Activated B cell treated with CpG ODN at 0.5 μM for 24 hours (primary cell): ENCODE measurements at regions of chr4 and their contacts with region 1.

Region 1: DNA sequence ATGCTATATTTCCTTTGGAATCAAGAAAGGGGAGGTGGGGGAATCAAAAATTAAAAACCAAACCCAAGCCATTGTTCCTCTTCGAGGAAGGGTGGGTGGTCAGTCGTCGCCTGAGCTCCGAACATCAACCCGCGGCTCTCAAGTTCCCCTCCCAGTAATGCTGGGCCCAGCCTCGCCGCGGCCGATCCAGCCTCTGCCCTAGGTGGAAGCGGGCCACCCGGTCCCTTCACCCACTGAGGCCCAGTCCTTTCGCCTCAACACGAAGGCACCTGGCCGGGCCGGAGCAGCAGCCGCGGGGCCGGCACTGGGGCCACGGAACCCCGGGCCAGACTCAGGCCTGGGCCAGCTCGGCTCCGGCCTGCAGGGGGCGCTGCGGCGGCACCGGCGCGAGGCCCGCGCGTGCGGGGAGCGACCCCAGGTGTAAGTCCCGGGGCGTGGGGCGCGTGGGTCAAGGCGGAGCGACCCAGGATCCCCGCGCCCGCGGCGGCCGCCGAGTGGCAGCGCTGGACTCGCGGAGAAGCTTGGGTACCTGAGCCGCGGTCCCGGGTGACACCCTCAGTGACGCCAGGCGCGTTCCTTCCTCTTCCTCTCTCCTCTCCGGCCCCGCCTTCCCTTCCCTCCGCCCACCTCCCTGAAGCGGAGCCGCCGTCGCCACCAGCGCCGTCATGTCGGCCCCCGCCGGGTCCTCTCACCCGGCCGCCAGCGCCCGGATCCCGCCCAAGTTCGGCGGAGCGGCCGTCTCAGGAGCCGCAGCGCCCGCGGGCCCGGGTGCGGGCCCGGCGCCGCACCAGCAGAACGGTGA is at the start of gene SEC24B:
- DNase-seq: peak; percentile 91
- ATAC-seq: peak; percentile 91
- H3K4me3 Mint-ChIP-seq: peak within 1 kb of the TSS; percentile 86
- H3K27ac Mint-ChIP-seq: peak within 1 kb of the TSS; percentile 79
- H3K4me1 Mint-ChIP-seq: peaks cover 46% of the 10 kb centered on the region
- H3K27me3 Mint-ChIP-seq: no peaks in the 10 kb centered on the region
- CTCF ChIP-seq: no peak
- total RNA-seq, gene SEC24B: 32.0 and 36.1 TPM in 2 replicates

Region 2: DNA sequence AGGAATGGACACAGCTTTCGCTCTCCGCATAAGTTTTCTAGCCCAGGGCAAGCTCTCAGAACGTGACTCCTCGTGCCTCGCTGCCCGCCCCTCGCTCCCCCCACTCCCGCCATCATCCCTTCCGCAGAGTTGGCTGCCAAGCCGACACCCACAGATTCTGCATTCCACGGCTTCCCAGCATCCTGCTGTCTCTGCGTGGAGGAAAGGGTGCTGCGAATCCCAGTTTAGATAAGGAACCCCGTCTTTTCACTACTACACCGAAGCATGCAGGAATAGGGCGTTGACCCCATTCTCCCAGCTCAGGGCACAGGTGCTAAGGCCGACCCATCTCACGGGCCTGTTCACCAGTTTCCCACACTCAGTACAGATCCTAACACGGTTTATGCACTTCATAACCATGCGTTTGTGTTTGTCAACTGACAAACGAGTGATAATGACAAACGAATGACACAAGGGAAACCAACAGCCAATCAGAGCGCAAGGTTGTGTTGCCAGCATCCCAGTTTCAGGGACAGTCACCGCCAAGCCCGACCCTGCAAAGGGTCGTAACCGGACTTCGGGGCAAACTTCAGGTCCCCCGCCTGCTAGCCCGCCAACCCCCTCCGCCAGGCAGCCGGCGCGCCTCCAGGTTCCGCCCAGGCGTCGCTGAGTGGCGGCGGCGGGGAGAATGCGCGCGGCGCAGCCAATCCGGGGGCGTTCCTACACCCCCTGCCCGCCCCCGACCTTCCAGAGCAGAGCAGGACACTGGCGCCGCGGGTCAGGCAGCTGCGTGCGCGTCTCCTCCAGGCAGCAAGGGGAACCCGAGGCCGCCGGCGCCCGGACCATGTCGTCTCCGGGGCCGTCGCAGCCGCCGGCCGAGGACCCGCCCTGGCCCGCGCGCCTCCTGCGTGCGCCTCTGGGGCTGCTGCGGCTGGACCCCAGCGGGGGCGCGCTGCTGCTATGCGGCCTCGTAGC is 1502.3 kb before region 1 on chr4 and contains the start of gene CYP2U1:
- CTCF ChIA-PET with region 1: no interaction called
- POLR2A ChIA-PET with region 1: no interaction called
- intact Hi-C with region 1: loop called (anchors 5 kb)
- DNase-seq: peak; percentile 88
- ATAC-seq: peak; percentile 95
- H3K4me3 Mint-ChIP-seq: peak within 1 kb of the TSS; percentile 96
- H3K27ac Mint-ChIP-seq: peak within 1 kb of the TSS; percentile 91
- H3K4me1 Mint-ChIP-seq: peaks cover 41% of the 10 kb centered on the region
- H3K27me3 Mint-ChIP-seq: no peaks in the 10 kb centered on the region
- CTCF ChIP-seq: no peak
- total RNA-seq, gene CYP2U1: 9.2 and 11.6 TPM in 2 replicates

Region 3: DNA sequence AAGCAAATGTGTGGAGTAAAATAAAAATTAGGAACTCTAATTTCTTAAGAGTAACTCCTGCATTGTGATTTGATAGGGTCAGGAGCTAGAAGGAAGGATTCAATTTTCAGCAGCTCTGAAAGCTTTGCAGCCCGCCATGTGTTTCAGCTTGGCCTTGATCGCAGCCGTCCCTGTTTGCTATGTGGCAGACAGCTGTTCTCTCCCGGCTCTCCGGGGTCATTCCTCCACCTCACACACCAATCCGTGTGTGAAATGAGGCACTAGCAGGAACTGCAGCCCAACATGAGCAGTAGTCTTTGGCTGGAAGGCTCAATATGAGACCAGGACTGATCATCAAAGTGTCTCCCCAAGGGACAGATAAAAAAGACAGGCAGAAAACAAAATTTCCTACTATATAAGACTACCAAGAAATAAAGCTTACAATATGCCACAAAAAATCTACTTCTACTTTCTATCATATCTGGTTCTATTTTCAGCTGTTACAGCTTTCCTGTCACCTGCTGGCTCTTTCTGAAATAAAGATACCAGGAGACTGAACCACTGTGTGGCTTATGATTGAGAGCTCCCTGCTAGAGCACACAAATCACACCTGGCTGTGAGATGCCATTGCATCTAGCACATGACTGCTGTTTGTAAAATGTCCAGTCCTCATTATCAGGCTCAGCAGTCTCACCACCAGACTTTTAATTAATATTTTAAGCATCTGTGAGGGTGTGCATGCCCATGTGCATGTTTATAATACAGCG is 43.9 kb before region 1 on chr4:
- CTCF ChIA-PET with region 1: no interaction called
- POLR2A ChIA-PET with region 1: no interaction called
- intact Hi-C with region 1: no loop called
- DNase-seq: no peak
- ATAC-seq: no peak
- H3K4me3 Mint-ChIP-seq: no peak overlapping the region
- H3K27ac Mint-ChIP-seq: no peak overlapping the region
- H3K4me1 Mint-ChIP-seq: no peaks in the 10 kb centered on the region
- H3K27me3 Mint-ChIP-seq: peaks cover 5% of the 10 kb centered on the region
- CTCF ChIP-seq: no peak

Region 4: GRCh38 chr4:109444182-109444844 is 10.9 kb after region 1 on chr4:
- CTCF ChIA-PET with region 1: interaction called, 9 read pairs
- POLR2A ChIA-PET with region 1: interaction called, 14 read pairs
- intact Hi-C with region 1: loop called (anchors 1 kb)
- DNase-seq: no peak
- ATAC-seq: peak; percentile 79
- H3K4me3 Mint-ChIP-seq: peak overlapping the region; percentile 57
- H3K27ac Mint-ChIP-seq: peak overlapping the region; percentile 67
- H3K4me1 Mint-ChIP-seq: peaks cover 72% of the 10 kb centered on the region
- H3K27me3 Mint-ChIP-seq: no peaks in the 10 kb centered on the region
- CTCF ChIP-seq: no peak

Region 5: GRCh38 chr4:109511414-109511813 is 78.0 kb after region 1 on chr4:
- CTCF ChIA-PET with region 1: no interaction called
- POLR2A ChIA-PET with region 1: interaction called, 7 read pairs
- intact Hi-C with region 1: loop called (anchors 5 kb)
- DNase-seq: no peak
- ATAC-seq: no peak
- H3K4me3 Mint-ChIP-seq: no peak overlapping the region
- H3K27ac Mint-ChIP-seq: no peak overlapping the region
- H3K4me1 Mint-ChIP-seq: no peaks in the 10 kb centered on the region
- H3K27me3 Mint-ChIP-seq: no peaks in the 10 kb centered on the region
- CTCF ChIP-seq: no peak

Region 6: DNA sequence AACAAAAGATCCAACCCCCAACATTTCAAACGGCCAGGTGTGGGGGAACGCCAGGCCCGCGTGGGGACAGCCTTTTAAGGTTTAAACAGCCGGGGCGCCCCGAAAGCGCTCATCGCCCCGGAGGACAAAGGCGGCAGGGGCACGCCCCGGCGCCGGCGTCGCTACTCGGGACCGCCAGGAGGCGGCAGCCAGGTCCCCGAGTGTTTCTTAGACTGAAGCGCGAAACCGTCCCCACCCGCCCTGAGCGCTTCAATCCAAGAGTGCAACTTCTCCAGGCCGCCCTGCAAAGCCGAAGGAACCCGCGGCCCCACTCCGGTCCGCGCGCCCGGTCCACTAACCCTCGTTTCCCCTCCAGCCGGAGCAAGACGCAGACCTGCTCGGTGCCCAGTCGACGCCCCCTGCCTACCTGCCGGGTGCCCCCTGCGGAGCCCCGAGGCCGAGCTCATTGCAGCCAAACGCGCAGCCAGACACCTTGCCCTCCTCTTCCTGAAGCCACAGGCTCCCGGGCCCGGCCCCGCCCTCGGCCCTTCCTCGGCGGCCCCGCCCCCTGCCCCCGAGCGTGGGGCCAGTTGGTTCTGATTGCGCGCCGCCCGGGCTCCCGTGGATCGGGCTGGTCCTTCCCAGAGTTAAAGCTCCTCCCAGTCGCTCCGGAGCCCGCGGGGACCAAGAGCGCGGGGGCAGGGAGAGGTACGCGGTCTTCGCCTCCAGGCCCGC is 269.7 kb after region 1 on chr4 and contains the start of gene CASP6:
- CTCF ChIA-PET with region 1: interaction called, 7 read pairs
- POLR2A ChIA-PET with region 1: interaction called, 7 read pairs
- intact Hi-C with region 1: loop called (anchors 2 kb)
- DNase-seq: peak; percentile 66
- ATAC-seq: peak; percentile 83
- H3K4me3 Mint-ChIP-seq: peak within 1 kb of the TSS; percentile 93
- H3K27ac Mint-ChIP-seq: peak within 1 kb of the TSS; percentile 76
- H3K4me1 Mint-ChIP-seq: peaks cover 20% of the 10 kb centered on the region
- H3K27me3 Mint-ChIP-seq: no peaks in the 10 kb centered on the region
- CTCF ChIP-seq: no peak
- total RNA-seq, gene CASP6: 5.6 and 7.0 TPM in 2 replicates

Region 7: GRCh38 chr4:109815151-109816081 is 382.0 kb after region 1 on chr4 and contains the start of gene GAR1:
- CTCF ChIA-PET with region 1: interaction called, 4 read pairs
- POLR2A ChIA-PET with region 1: interaction called, 11 read pairs
- intact Hi-C with region 1: loop called (anchors 1 kb)
- DNase-seq: peak; percentile 70
- ATAC-seq: peak; percentile 97
- H3K4me3 Mint-ChIP-seq: peak within 1 kb of the TSS; percentile 94
- H3K27ac Mint-ChIP-seq: peak within 1 kb of the TSS; percentile 93
- H3K4me1 Mint-ChIP-seq: peaks cover 28% of the 10 kb centered on the region
- H3K27me3 Mint-ChIP-seq: no peaks in the 10 kb centered on the region
- CTCF ChIP-seq: no peak
- total RNA-seq, gene GAR1: 21.0 and 23.1 TPM in 2 replicates